ENCODE measurements at regions of chr6 and their contacts with region 1.

Region 1: GRCh38 chr6:149200276-149200938 is 117.1 kb upstream of the TAB2 start:
- DNase-seq: no peak
- H3K4me3 Mint-ChIP-seq: no peak overlapping the region
- H3K27ac Mint-ChIP-seq: no peak overlapping the region
- H3K4me1 Mint-ChIP-seq: peaks cover 9% of the 10 kb centered on the region
- H3K27me3 Mint-ChIP-seq: no peaks in the 10 kb centered on the region

Region 2: GRCh38 chr6:149190224-149190831 is 10.1 kb before region 1 on chr6:
- CTCF ChIA-PET with region 1: interaction called, 17 read pairs
- POLR2A ChIA-PET with region 1: no interaction called
- intact Hi-C with region 1: no loop called
- DNase-seq: peak; percentile 84
- H3K4me3 Mint-ChIP-seq: no peak overlapping the region
- H3K27ac Mint-ChIP-seq: peak overlapping the region; percentile 16
- H3K4me1 Mint-ChIP-seq: peaks cover 41% of the 10 kb centered on the region
- H3K27me3 Mint-ChIP-seq: no peaks in the 10 kb centered on the region